Activated CD8-positive, alpha-beta T cell treated with anti-CD3 and anti-CD28 coated beads, Interleukin-2, amount 10 ng/mL, durations not matched to agents 7 days and 5 days (primary cell): ENCODE measurements at regions of chr2 and their contacts with region 1.

Region 1: GRCh38 chr2:24434541-24434940 is 56.5 kb upstream of the NCOA1 start:
- DNase-seq: no peak
- ATAC-seq: no peak
- H3K4me3 Mint-ChIP-seq: no peak overlapping the region
- H3K27ac Mint-ChIP-seq: no peak overlapping the region
- H3K4me1 Mint-ChIP-seq: no peaks in the 10 kb centered on the region
- H3K27me3 Mint-ChIP-seq: peaks cover 4% of the 10 kb centered on the region

Region 2: DNA sequence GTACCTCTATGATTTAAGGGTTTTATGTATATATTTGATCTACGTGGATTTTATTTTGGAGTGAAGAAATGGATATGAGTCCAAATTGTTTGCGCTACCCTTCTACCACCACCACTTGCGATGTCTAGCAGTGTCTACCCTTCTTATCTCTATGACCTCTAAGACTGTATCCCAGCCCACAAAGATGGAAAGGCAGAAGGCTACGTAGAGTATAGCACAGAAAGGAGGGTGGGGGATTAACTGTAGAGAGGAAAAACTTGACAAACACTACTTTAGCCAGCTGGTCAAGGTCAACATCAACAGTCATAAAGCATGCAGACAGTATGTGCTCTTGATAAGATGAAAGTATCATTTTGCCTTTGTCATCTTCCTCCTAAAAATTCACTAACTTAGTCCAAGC is 88.6 kb before region 1 on chr2:
- CTCF ChIA-PET with region 1: no interaction called
- POLR2A ChIA-PET with region 1: no interaction called
- DNase-seq: no peak
- ATAC-seq: no peak
- H3K4me3 Mint-ChIP-seq: no peak overlapping the region
- H3K27ac Mint-ChIP-seq: no peak overlapping the region
- H3K4me1 Mint-ChIP-seq: peaks cover 18% of the 10 kb centered on the region
- H3K27me3 Mint-ChIP-seq: no peaks in the 10 kb centered on the region

Region 3: GRCh38 chr2:24421668-24422067 is 12.9 kb before region 1 on chr2:
- CTCF ChIA-PET with region 1: interaction called, 14 read pairs
- POLR2A ChIA-PET with region 1: no interaction called
- DNase-seq: peak; percentile 64
- ATAC-seq: no peak
- H3K4me3 Mint-ChIP-seq: no peak overlapping the region
- H3K27ac Mint-ChIP-seq: no peak overlapping the region
- H3K4me1 Mint-ChIP-seq: no peaks in the 10 kb centered on the region
- H3K27me3 Mint-ChIP-seq: peaks cover 2% of the 10 kb centered on the region

Region 4: GRCh38 chr2:25032094-25032493 is 597.6 kb after region 1 on chr2:
- CTCF ChIA-PET with region 1: no interaction called
- POLR2A ChIA-PET with region 1: no interaction called
- DNase-seq: no peak
- ATAC-seq: no peak
- H3K4me3 Mint-ChIP-seq: no peak overlapping the region
- H3K27ac Mint-ChIP-seq: no peak overlapping the region
- H3K4me1 Mint-ChIP-seq: peaks cover 4% of the 10 kb centered on the region
- H3K27me3 Mint-ChIP-seq: peaks cover 10% of the 10 kb centered on the region